ENCODE measurements at regions of chr1 and their contacts with region 1.

Region 1: GRCh38 chr1:12208764-12209494 is 20.9 kb upstream of the VPS13D start:
- DNase-seq: peak; percentile 94
- H3K4me3 ChIP-seq: no peak overlapping the region
- H3K27ac ChIP-seq: peak overlapping the region in 7 of 8 donors; percentile 23 to 86 (median 39)
- H3K4me1 ChIP-seq: peaks cover 20 to 76% (median 46%) of the 10 kb centered on the region in 6 donors
- H3K27me3 ChIP-seq: no peaks in the 10 kb centered on the region
- CTCF ChIP-seq: peak; percentile 89 to 98 (median 94)
- POLR2A ChIP-seq: no peak

Region 2: GRCh38 chr1:12124693-12125421 is 84.1 kb before region 1 on chr1:
- intact Hi-C with region 1: loop called (anchors 1 kb)
- DNase-seq: peak; percentile 92
- H3K4me3 ChIP-seq: peak overlapping the region in 1 of 8 donors; percentile 21
- H3K27ac ChIP-seq: peak overlapping the region in 7 of 8 donors; percentile 37 to 88 (median 50)
- H3K4me1 ChIP-seq: peaks cover 15 to 42% (median 24%) of the 10 kb centered on the region in 6 donors
- H3K27me3 ChIP-seq: no peaks in the 10 kb centered on the region
- CTCF ChIP-seq: peak; percentile 88 to 99 (median 95)
- POLR2A ChIP-seq: no peak